ENCODE measurements at regions of chr17 and their contacts with region 1.

Region 1: DNA sequence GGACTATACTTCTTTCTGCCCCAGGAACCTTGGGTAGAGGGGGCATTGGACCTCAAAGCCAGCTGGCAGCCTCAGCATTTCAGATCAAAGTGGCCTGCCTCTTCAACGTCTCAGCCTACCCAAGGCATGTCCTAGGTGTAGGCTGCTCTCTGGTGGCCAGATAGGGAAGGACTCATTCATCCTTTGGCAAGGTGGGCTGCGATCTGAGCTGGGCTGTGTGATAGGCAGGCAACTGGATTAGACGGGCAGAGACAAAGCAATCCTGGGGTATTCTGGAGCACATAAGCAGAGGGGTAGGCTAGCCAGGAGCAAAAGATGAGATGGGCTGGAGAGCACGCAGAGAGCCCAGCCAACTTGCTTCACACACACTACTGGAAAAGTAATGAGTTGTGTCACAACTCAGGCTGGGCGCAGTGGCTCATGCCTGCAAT is 8.8 kb upstream of the NAGLU start:
- DNase-seq: peak; percentile 87
- H3K4me3 ChIP-seq: no peak overlapping the region
- H3K27ac ChIP-seq: no peak overlapping the region
- H3K4me1 ChIP-seq: peaks cover 19% of the 10 kb centered on the region
- CTCF ChIP-seq: peak; percentile 89

Region 2: GRCh38 chr17:42322382-42323267 is 204.7 kb before region 1 on chr17:
- CTCF ChIA-PET with region 1: no interaction called
- POLR2A ChIA-PET with region 1: no interaction called
- intact Hi-C with region 1: loop called (anchors 1 kb)
- DNase-seq: peak; percentile 93
- H3K4me3 ChIP-seq: no peak overlapping the region
- H3K27ac ChIP-seq: no peak overlapping the region
- H3K4me1 ChIP-seq: peaks cover 14% of the 10 kb centered on the region
- CTCF ChIP-seq: peak; percentile 100

Region 3: DNA sequence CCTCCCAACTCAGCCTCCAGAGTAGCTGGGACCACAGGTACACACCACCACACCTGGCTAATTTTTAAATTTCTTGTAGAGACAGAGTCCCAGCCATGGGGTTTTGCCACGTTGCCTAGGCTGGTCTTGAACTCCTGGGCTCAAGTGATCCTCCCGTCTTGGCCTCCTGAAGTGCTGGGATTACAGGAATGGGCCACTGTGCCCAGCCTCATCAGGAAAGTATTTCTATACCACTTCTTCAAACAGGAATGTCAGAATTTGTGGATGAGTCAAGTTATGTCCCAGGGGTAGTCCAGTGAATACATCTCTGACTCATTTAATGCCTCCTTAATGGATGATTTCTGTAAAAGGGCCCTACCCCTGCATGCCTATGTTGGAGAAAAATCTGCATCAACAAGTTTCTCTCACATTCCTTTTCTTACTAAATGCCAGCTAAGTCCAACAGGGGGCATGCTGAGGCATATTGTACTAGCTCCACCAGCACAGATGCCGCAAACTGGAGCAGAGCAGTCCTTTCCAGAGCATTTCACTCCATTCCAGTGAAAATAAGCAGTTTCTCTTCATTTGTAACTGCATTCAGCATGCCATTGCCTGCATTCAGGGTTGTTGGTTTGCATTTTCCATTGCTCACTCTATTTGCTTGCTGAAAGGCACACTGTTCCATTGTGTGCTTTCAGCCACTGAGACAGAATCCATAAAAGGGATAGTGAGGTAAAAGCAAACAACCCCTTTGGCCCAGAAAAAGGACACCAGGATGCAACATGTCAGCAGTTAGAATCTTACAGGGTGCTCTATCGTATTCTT is 98.9 kb before region 1 on chr17:
- CTCF ChIA-PET with region 1: no interaction called
- POLR2A ChIA-PET with region 1: interaction called, 5 read pairs
- intact Hi-C with region 1: loop called (anchors 1 kb)
- DNase-seq: peak; percentile 74
- H3K4me3 ChIP-seq: no peak overlapping the region
- H3K27ac ChIP-seq: no peak overlapping the region
- H3K4me1 ChIP-seq: peaks cover 14% of the 10 kb centered on the region
- CTCF ChIP-seq: peak; percentile 87

Region 4: DNA sequence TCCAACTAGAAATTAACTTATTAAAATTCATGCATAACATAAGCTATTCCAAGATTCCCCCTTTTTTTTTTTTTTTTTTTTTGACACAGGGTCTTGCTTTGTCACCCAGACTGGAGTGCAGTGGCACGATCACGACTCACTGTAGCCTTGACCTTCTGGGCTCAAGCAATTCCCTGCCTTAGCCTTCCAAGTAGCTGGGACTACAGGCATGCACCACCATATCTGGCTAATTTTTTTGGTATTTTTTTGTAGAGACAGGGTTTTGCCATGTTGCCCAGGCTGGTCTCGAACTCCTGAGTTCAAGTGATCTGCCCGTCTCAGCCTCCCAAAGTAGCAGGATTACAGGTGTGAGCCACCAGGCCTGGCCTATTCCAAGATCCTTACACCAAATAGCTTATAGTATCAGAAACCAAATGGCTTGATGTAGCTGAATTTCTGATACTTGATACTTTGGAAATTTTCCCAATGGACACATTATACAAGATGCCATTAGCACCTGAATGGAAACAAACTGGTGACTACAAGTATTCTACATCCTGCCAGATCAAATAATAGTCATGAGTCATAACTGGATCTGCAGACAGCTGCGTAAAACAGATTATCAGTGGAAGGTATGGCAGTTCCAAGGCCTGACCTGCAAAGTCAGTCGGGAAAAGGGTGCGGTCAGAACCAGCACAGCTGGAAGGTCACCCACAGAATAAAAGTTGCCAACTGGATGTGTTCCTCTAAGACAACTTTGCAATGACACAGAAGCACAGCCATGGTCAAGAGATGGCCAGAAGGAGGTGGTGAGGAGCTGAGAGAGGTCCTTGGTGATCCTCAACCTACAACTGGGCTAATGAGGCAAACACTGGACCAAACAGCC is 96.7 kb after region 1 on chr17:
- CTCF ChIA-PET with region 1: no interaction called
- POLR2A ChIA-PET with region 1: no interaction called
- intact Hi-C with region 1: no loop called
- DNase-seq: no peak
- H3K4me3 ChIP-seq: no peak overlapping the region
- H3K27ac ChIP-seq: no peak overlapping the region
- H3K4me1 ChIP-seq: peaks cover 11% of the 10 kb centered on the region
- CTCF ChIP-seq: no peak